Transverse colon (tissue), 4 donors: ENCODE measurements at regions of chr15 and their contacts with region 1.

Region 1: DNA sequence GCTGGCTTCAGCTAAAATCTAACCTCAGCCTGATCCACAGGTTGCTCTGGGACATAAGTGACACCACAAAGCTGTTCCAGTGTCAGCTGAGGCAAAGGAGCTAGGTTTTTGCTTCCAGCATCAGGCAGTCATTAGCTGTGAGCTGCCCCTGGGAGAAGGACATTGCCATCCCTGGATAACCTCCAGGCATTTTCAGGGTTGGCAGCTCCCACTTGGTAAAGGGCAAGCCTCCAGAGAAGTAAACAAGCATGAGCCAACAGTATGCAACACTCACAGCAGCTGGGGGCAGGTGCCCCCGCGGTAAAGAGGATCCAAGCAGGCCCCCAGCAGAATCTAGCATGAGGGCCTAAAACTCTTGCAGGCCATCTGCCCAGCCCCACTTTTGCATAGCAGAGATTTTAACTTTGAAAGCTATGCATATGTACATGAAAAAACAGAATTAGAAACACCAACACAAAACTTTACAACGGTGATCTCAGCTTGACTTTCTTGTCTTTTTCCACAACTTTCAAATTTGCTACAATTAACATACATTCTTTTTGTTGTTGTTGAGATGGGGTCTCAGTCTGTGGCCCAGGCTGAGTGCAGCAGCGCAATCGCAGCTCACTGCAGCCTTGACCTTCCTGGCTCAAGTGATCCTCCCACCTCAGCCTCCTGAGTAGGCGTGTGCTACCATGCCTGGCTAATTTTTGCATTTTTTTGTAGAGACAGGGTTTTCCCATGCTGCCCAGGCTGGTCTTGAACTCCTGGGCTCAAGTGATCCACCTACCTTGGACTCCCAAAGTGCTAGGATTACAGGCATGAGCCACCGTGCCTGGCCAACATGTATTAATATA is 83.8 kb upstream of the TPM1 start:
- DNase-seq: no peak
- H3K4me3 ChIP-seq: no peak overlapping the region
- H3K27ac ChIP-seq: no peak overlapping the region
- H3K4me1 ChIP-seq: peaks cover 0 to 6% (median 2%) of the 10 kb centered on the region in 4 donors
- H3K27me3 ChIP-seq: no peaks in the 10 kb centered on the region
- CTCF ChIP-seq: no peak
- EP300 ChIP-seq: no peak
- POLR2A ChIP-seq: no peak

Region 2: DNA sequence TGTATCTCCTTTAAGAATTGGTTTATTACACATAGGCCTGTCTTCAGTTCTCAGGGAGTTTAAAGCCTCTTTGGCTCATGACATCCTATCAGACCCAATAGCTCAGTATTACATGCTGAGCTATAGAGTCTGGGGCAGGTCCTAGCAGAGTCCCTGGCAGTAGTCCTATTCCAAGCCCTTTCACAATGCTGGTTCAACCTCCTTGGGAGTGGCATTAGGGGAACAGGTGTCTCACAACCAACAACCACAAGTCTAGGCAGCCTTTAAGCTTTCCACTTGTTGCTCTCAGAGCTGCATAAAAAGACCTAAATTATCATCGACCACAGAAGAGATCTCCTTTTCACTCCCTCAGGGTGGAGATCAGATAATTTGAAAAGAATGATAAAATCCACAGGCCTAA is 770.8 kb before region 1 on chr15:
- in situ Hi-C with region 1: no loop called
- intact Hi-C with region 1: no loop called
- DNase-seq: no peak
- H3K4me3 ChIP-seq: no peak overlapping the region
- H3K27ac ChIP-seq: no peak overlapping the region
- H3K4me1 ChIP-seq: no peaks in the 10 kb centered on the region
- H3K27me3 ChIP-seq: peaks cover 4% of the 10 kb centered on the region
- CTCF ChIP-seq: no peak
- EP300 ChIP-seq: no peak
- POLR2A ChIP-seq: no peak

Region 3: GRCh38 chr15:62886431-62887071 is 72.2 kb before region 1 on chr15:
- in situ Hi-C with region 1: no loop called
- intact Hi-C with region 1: no loop called
- DNase-seq: no peak
- H3K4me3 ChIP-seq: no peak overlapping the region
- H3K27ac ChIP-seq: peak overlapping the region; percentile 52 to 68 (median 60)
- H3K4me1 ChIP-seq: peaks cover 9 to 43% (median 27%) of the 10 kb centered on the region in 4 donors
- H3K27me3 ChIP-seq: no peaks in the 10 kb centered on the region
- CTCF ChIP-seq: no peak
- EP300 ChIP-seq: no peak
- POLR2A ChIP-seq: no peak

Region 4: GRCh38 chr15:62912808-62913207 is 45.9 kb before region 1 on chr15:
- in situ Hi-C with region 1: no loop called
- intact Hi-C with region 1: loop called (anchors 5 kb)
- DNase-seq: no peak
- H3K4me3 ChIP-seq: no peak overlapping the region
- H3K27ac ChIP-seq: no peak overlapping the region
- H3K4me1 ChIP-seq: no peaks in the 10 kb centered on the region
- H3K27me3 ChIP-seq: no peaks in the 10 kb centered on the region
- CTCF ChIP-seq: no peak
- EP300 ChIP-seq: no peak
- POLR2A ChIP-seq: no peak